Mammary epithelial cell (primary cell): ENCODE measurements at regions of chr3 and their contacts with region 1.

Region 1: DNA sequence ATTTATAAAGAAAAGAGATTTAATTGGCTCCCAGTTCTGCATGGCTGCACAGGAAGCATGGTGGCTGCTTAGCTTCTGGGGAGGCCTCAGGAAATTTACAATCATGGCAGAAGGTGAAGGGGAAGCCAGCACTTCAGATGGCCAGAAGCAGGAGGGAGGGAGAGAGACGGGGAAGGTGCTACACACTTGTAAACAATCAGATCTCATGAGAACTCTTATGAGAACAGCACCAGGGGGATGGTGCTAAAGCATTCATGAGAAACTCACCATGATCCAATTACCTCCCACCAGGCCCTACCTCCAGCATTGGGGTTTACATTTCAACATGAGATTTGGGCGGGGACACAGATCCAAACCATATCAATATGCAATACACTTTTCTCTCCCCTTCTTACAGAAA is 73.7 kb downstream of the ECT2 start:
- DNase-seq: no peak
- H3K4me3 ChIP-seq: no peak overlapping the region
- H3K27ac ChIP-seq: no peak overlapping the region
- H3K4me1 ChIP-seq: no peaks in the 10 kb centered on the region
- H3K27me3 ChIP-seq: no peaks in the 10 kb centered on the region
- CTCF ChIP-seq: no peak

Region 2: GRCh38 chr3:172726382-172726781 is 97.8 kb before region 1 on chr3:
- CTCF ChIA-PET with region 1: no interaction called
- dilution Hi-C with region 1: no loop called
- in situ Hi-C with region 1: no loop called
- intact Hi-C with region 1: no loop called
- DNase-seq: no peak
- H3K4me3 ChIP-seq: no peak overlapping the region
- H3K27ac ChIP-seq: no peak overlapping the region
- H3K4me1 ChIP-seq: peaks cover 4% of the 10 kb centered on the region
- H3K27me3 ChIP-seq: no peaks in the 10 kb centered on the region
- CTCF ChIP-seq: no peak

Region 3: GRCh38 chr3:172808969-172809546 is 15.2 kb before region 1 on chr3:
- CTCF ChIA-PET with region 1: no interaction called
- dilution Hi-C with region 1: no loop called
- in situ Hi-C with region 1: no loop called
- intact Hi-C with region 1: loop called (anchors 1 kb)
- DNase-seq: peak; percentile 19
- H3K4me3 ChIP-seq: no peak overlapping the region
- H3K27ac ChIP-seq: no peak overlapping the region
- H3K4me1 ChIP-seq: no peaks in the 10 kb centered on the region
- H3K27me3 ChIP-seq: no peaks in the 10 kb centered on the region
- CTCF ChIP-seq: peak; percentile 25 to 40